Right ventricle myocardium superior (tissue), 1 donor: ENCODE measurements at regions of chr2 and their contacts with region 1.

Region 1: GRCh38 chr2:227130636-227131035 is 33.4 kb downstream of the COL4A4 start:
- DNase-seq: no peak
- ATAC-seq: no peak

Region 2: GRCh38 chr2:227025510-227025909 is 105.1 kb before region 1 on chr2:
- intact Hi-C with region 1: no loop called
- DNase-seq: no peak
- ATAC-seq: no peak

Region 3: GRCh38 chr2:227241005-227241404 is 110.4 kb after region 1 on chr2:
- intact Hi-C with region 1: loop called (anchors 2 kb)
- DNase-seq: no peak
- ATAC-seq: no peak